Panc1 (cell line): ENCODE measurements at regions of chr15 and their contacts with region 1.

Region 1: DNA sequence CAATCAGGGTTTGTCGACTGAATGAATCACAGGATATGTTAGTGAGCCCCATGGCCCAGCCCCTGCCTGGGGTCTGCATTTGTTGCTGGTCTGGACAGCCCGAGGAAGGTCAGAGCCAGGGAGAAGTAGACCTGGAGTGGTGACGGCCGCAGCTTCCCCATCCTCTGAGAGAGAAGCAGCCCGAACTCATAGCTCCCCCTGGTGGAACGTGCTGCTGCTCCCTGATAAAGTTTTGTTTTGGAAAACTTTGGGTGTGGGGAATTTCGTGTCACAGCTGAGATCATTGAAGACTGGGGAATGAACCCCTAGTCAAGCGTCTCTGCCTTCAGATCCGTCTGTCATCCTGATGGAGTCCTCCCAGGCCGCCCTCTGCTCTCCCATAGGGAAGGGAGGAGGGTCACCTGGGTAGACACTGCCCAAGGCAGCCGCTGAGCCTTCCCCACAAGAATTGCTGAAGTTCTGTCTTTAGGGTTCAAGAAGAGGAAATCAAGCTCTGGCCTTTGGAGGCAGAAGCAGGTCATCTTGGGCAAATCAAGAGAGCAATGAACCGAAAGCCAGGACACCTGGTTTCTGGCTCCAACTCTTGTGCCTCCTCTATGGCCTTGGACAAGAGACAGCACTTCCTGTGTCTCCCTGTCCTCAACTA is 60.5 kb downstream of the GLDN start:
- DNase-seq: no peak
- ATAC-seq: 0 out of 2 replicates have a peak, but pooled peaks have one; percentile 50
- H3K4me3 ChIP-seq: no peak overlapping the region
- H3K27ac ChIP-seq: no peak overlapping the region
- H3K4me1 ChIP-seq: no peaks in the 10 kb centered on the region
- H3K27me3 ChIP-seq: peaks cover 9% of the 10 kb centered on the region
- CTCF ChIP-seq: peak; percentile 79

Region 2: DNA sequence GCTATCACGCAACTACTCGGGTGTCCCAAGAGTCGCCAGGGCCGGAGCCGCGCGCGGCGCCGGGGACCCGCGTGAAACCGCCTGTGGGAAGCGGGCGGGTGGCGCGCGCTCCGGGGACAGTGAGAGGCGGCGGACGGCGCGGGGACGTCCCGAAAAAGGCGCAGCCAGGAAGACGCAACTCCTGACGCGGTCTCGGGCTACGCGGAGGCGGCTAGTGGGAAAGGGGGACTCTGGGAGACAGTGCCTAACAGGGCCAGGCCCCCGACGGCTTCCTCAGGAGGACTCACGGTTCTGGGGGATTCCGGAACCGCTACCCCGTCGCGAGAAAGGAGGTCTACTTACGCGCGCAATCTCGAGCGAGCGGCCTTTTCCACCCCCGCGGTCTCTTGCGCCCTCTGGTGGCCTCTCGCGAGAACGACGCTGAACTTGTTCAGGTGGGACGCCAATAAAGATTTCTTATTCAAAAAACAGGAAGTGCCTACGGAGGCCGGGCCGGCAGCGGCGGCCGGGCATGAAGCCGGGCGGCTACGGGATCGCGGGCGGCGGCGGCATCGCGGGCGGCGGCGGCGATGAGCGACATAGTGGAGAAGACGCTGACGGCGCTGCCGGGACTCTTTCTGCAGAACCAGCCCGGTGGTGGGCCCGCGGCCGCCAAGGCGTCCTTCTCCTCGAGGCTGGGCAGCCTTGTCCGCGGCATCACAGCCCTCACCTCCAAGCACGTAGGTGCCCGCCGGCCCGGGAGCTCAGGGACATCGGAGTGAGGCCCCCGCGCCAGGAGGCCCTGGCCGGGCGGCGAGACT is 493.6 kb before region 1 on chr15 and contains the start of gene AP4E1:
- CTCF ChIA-PET with region 1: no interaction called
- POLR2A ChIA-PET with region 1: no interaction called
- in situ Hi-C with region 1: no loop called
- intact Hi-C with region 1: no loop called
- DNase-seq: peak; percentile 78
- ATAC-seq: peak; percentile 83
- H3K4me3 ChIP-seq: peak within 1 kb of the TSS; percentile 89 to 92
- H3K27ac ChIP-seq: peak within 1 kb of the TSS; percentile 96
- H3K4me1 ChIP-seq: peaks cover 11% of the 10 kb centered on the region; the same call in 1 of the 2 replicates
- H3K27me3 ChIP-seq: no peaks in the 10 kb centered on the region
- CTCF ChIP-seq: peak; percentile 98
- total RNA-seq, gene AP4E1: 13.6 TPM

Region 3: DNA sequence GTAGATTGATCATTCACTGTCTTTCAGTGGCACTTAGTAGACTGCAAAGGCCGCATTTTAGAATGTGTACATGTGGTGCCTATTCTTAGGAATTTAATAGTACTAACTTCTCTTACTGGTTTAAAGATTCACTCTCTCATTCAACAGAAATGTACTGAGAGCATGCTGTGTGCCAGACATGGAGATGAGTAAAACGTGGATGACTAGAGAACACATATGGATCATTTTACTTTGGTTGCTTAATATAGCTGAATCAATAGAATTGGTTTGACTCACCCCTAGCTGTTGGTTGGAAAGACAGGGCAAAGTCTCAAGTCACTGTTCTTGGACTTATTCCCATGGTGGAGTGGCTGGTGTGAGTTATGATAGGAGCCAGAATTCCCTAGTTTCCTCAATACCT is 198.2 kb before region 1 on chr15:
- CTCF ChIA-PET with region 1: no interaction called
- POLR2A ChIA-PET with region 1: no interaction called
- in situ Hi-C with region 1: no loop called
- intact Hi-C with region 1: no loop called
- DNase-seq: no peak
- ATAC-seq: no peak
- H3K4me3 ChIP-seq: no peak overlapping the region
- H3K27ac ChIP-seq: no peak overlapping the region
- H3K4me1 ChIP-seq: no peaks in the 10 kb centered on the region
- H3K27me3 ChIP-seq: no peaks in the 10 kb centered on the region; the same call in none of the 2 replicates
- CTCF ChIP-seq: no peak

Region 4: GRCh38 chr15:51281368-51281967 is 120.5 kb before region 1 on chr15:
- CTCF ChIA-PET with region 1: no interaction called
- POLR2A ChIA-PET with region 1: no interaction called
- in situ Hi-C with region 1: no loop called
- intact Hi-C with region 1: loop called (anchors 5 kb)
- DNase-seq: no peak
- ATAC-seq: peak; percentile 83
- H3K4me3 ChIP-seq: no peak overlapping the region
- H3K27ac ChIP-seq: no peak overlapping the region
- H3K4me1 ChIP-seq: no peaks in the 10 kb centered on the region
- H3K27me3 ChIP-seq: peaks cover 8% of the 10 kb centered on the region
- CTCF ChIP-seq: peak; percentile 77

Region 5: DNA sequence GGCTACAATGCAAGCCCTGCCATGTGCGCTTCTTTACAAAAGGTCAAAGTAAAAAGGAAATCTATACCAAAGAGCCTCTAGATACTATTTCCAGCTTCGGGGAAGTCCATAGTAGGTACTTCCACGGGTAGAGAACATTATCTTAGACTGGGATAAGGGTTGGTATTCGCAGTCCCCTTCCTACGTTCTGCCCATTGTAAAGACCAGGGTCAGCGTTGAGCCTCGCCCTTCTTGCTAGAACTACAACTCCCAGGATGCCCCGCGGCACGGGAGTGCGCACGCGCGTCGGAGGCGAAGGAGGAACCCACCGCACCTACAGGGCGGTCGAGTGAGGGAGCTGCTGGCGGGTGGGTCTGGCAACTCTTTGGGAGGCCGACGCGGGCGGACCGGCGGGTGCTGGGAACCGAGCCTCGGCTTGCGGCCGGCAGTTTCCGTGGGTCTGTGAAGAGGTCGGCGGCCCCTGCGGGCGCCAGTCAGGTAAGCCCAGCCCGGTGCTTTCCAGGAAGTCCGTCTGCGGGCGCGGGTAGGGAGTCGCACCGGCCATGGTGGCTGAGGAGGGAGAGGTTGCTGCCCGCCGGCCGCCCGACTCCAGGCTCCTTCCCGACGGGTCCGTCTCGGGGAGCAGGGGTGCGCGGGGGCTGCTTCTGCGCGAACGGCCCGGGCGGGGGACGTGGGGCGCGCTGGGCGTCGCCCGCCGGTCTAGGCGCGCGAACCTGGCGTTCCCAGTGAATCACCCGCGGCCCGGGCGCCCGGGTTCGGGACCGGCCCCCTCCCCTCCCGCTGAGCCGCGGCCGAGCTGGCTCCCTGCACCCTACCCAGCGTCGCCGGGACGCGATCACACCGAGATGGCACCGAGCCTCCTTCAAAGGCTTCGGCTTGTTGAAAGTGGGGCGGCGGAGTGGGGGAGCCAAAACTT is 427.6 kb after region 1 on chr15 and contains the start of gene TMOD3:
- CTCF ChIA-PET with region 1: no interaction called
- POLR2A ChIA-PET with region 1: no interaction called
- in situ Hi-C with region 1: no loop called
- intact Hi-C with region 1: no loop called
- DNase-seq: peak; percentile 74
- ATAC-seq: peak; percentile 98
- H3K4me3 ChIP-seq: peak within 1 kb of the TSS; percentile 87 to 94
- H3K27ac ChIP-seq: peak within 1 kb of the TSS; percentile 84
- H3K4me1 ChIP-seq: peaks cover 14% of the 10 kb centered on the region; the same call in 1 of the 2 replicates
- H3K27me3 ChIP-seq: no peaks in the 10 kb centered on the region
- CTCF ChIP-seq: no peak
- total RNA-seq, gene TMOD3: 53.4 TPM